Heart left ventricle (tissue), 16 donors: ENCODE measurements at regions of chr6 and their contacts with region 1.

Region 1: DNA sequence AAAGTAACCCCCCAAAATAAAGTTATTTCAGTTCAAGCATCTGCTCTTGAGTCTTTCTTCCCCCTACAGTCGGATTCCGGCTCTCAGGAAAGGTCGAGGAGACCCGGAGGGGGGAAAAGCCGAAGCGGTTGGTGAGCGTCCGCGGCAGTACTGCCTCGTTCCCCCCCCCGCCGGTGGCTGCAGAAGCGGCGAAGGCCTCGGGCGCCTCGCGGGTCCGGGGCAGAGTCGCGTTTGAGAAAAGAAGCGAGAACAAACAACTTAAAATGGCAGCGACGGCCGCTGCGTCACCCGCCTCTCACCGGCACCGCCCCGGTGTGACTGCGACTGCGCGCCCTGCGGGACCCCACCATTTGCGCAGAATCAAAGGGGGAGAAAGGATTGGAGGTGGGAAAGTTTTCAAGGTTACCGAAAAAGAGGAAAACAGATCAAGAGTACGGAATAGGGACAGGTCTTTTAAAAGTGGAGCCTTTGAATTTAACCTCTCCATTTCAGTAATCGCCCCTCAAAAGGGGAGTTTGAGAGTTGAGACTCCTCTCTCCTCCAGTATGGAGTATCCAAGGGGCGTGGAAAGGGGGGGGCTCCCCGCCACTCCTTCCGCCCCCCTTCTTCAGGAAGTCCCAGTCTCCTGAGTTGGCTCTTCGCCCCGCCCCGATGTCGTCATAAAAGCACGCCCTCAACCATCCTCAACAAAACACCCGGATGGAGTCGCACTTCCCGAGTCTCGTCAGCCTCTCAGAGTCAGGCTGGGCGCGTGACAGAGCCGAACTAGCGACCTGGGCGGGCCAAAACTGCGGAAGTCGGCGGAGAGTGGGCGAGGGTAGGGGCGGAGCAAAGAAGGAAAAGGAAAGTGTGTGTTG is 1.9 kb upstream of the C6orf62 start:
- DNase-seq: peak; percentile 100
- ATAC-seq: peak; percentile 94 to 98 (median 96)
- H3K4me3 ChIP-seq: peak overlapping the region; percentile 75 to 97 (median 93)
- H3K27ac ChIP-seq: peak overlapping the region; percentile 93 to 100 (median 99)
- H3K4me1 ChIP-seq: peaks cover 0 to 42% (median 32%) of the 10 kb centered on the region in 12 donors
- H3K27me3 ChIP-seq: no peaks in the 10 kb centered on the region
- CTCF ChIP-seq: no peak
- POLR2A ChIP-seq: peak; percentile 87 to 99

Region 2: DNA sequence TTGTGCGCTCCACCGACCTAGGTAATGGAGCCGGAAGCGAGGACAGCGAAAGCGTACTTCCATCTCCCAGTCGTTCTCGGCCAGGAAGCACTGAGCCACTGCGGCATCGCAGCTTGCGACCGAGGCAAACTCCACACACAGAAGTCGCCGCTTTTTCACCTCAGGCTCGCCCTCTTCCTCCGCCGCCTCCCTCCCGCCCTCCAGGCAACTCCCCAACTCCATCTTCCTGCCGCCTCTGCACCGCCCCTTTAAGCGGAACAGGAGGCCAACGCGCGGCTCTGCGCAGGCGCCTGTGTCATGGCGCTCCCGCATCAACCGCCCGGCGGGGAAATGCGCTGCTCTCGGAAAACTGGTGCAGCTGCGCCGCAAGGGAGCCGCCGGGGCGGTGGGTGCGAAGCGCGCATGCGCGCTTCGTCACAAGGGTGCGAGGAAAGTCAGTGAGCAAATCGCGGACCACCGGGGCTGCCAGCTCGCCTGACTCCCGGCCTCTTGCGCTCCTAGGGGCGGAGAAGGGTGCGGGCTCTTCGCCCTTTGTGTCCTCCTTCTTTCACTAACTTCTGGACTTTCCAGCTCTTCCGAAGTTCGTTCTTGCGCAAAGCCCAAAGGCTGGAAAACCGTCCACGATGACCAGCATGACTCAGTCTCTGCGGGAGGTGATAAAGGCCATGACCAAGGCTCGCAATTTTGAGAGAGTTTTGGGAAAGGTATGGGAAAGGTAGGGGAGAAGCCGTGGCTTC is 54.0 kb before region 1 on chr6 and contains the starts of genes ACOT13 and TDP2:
- intact Hi-C with region 1: loop called in 7 of 10 experiments (anchors 1 to 5 kb)
- DNase-seq: peak; percentile 96 to 99 (median 97)
- ATAC-seq: peak; percentile 99 to 100 (median 100)
- H3K4me3 ChIP-seq: peak within 1 kb of the TSS; percentile 70 to 99 (median 83)
- H3K27ac ChIP-seq: peak within 1 kb of the TSS; percentile 77 to 96 (median 89)
- H3K4me1 ChIP-seq: peaks cover 0 to 40% (median 26%) of the 10 kb centered on the region in 12 donors
- H3K27me3 ChIP-seq: no peaks in the 10 kb centered on the region
- CTCF ChIP-seq: peak in 11 of 12 donors; percentile 31 to 72 (median 50)
- POLR2A ChIP-seq: peak in 1 of 2 donors; percentile 75
- total RNA-seq, gene ACOT13: 28.1 to 62.7 (median 55.3) TPM
- total RNA-seq, gene TDP2: 14.0 to 33.4 (median 25.1) TPM

Region 3: GRCh38 chr6:24683297-24684296 is 37.2 kb before region 1 on chr6:
- intact Hi-C with region 1: no loop called
- DNase-seq: no peak
- ATAC-seq: no peak
- H3K4me3 ChIP-seq: no peak overlapping the region
- H3K27ac ChIP-seq: no peak overlapping the region
- H3K4me1 ChIP-seq: peaks cover 0 to 7% (median 0%) of the 10 kb centered on the region in 12 donors
- H3K27me3 ChIP-seq: no peaks in the 10 kb centered on the region
- CTCF ChIP-seq: no peak
- POLR2A ChIP-seq: no peak

Region 4: GRCh38 chr6:24710519-24711303 is 10.1 kb before region 1 on chr6:
- intact Hi-C with region 1: loop called in 1 of 10 experiments (anchors 1 kb)
- DNase-seq: no peak
- ATAC-seq: peak in 1 of 4 donors; percentile 16
- H3K4me3 ChIP-seq: no peak overlapping the region
- H3K27ac ChIP-seq: no peak overlapping the region
- H3K4me1 ChIP-seq: peaks cover 3 to 50% (median 35%) of the 10 kb centered on the region in 12 donors
- H3K27me3 ChIP-seq: no peaks in the 10 kb centered on the region
- CTCF ChIP-seq: no peak
- POLR2A ChIP-seq: no peak

Region 5: DNA sequence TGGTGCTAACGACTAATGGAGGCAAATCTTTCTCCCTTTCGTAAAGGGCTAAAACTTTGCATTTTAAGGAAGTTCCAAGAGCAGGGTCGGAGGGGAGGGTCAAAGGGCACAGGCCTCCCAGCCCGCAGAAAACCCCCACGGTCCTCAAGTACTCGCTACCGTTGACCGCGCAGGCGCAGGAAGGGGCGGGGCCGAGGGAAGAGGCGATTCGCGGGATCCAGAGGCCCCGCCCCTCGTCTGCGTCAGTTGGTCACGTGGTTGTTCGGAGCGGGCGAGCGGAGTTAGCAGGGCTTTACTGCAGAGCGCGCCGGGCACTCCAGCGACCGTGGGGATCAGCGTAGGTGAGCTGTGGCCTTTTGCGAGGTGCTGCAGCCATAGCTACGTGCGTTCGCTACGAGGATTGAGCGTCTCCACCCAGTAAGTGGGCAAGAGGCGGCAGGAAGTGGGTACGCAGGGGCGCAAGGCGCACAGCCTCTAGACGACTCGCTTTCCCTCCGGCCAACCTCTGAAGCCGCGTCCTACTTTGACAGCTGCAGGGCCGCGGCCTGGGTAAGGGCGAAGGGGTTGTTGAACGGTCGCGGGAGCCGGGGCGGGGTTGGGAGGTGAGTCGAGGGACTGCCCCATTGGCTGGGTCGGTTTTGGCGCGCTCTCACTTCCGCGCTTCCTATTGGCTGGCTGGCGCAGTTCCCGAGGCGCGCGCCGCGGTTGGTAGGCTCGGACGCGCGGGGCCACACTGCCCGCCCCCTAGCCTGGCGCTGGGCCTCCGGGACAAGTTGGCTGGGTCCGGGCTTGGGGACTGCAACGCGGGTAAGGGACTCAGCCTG is 54.1 kb after region 1 on chr6 and contains the start of gene GMNN:
- intact Hi-C with region 1: loop called in 8 of 10 experiments (anchors 1 to 10 kb)
- DNase-seq: peak; percentile 99 to 100 (median 99)
- ATAC-seq: peak; percentile 98 to 99 (median 99)
- H3K4me3 ChIP-seq: peak within 1 kb of the TSS; percentile 42 to 100 (median 96)
- H3K27ac ChIP-seq: peak within 1 kb of the TSS; percentile 57 to 99 (median 93)
- H3K4me1 ChIP-seq: peaks cover 0 to 36% (median 14%) of the 10 kb centered on the region in 12 donors
- H3K27me3 ChIP-seq: no peaks in the 10 kb centered on the region
- CTCF ChIP-seq: peak in 1 of 12 donors; percentile 8
- POLR2A ChIP-seq: peak in 1 of 2 donors; percentile 63
- total RNA-seq, gene GMNN: 4.5 to 12.9 (median 6.8) TPM

Region 6: GRCh38 chr6:25070547-25071366 is 349.9 kb after region 1 on chr6:
- intact Hi-C with region 1: loop called in 1 of 10 experiments (anchors 10 kb)
- DNase-seq: peak; percentile 73 to 78 (median 76)
- ATAC-seq: peak in 3 of 4 donors; percentile 87 to 88 (median 87)
- H3K4me3 ChIP-seq: peak overlapping the region in 1 of 12 donors; percentile 20
- H3K27ac ChIP-seq: peak overlapping the region in 3 of 12 donors; percentile 31 to 58 (median 42)
- H3K4me1 ChIP-seq: peaks cover 0 to 6% (median 0%) of the 10 kb centered on the region in 12 donors
- H3K27me3 ChIP-seq: no peaks in the 10 kb centered on the region
- CTCF ChIP-seq: peak; percentile 87 to 96 (median 94)
- POLR2A ChIP-seq: no peak

Region 7: GRCh38 chr6:25449774-25450173 is 728.9 kb after region 1 on chr6:
- intact Hi-C with region 1: no loop called
- DNase-seq: no peak
- ATAC-seq: no peak
- H3K4me3 ChIP-seq: peak overlapping the region in 2 of 12 donors; percentile 13 to 43
- H3K27ac ChIP-seq: peak overlapping the region in 1 of 12 donors; percentile 54
- H3K4me1 ChIP-seq: peaks cover 0 to 49% (median 0%) of the 10 kb centered on the region in 12 donors
- H3K27me3 ChIP-seq: no peaks in the 10 kb centered on the region
- CTCF ChIP-seq: no peak
- POLR2A ChIP-seq: no peak